ENCODE measurements at regions of chr6 and their contacts with region 1.

Region 1: DNA sequence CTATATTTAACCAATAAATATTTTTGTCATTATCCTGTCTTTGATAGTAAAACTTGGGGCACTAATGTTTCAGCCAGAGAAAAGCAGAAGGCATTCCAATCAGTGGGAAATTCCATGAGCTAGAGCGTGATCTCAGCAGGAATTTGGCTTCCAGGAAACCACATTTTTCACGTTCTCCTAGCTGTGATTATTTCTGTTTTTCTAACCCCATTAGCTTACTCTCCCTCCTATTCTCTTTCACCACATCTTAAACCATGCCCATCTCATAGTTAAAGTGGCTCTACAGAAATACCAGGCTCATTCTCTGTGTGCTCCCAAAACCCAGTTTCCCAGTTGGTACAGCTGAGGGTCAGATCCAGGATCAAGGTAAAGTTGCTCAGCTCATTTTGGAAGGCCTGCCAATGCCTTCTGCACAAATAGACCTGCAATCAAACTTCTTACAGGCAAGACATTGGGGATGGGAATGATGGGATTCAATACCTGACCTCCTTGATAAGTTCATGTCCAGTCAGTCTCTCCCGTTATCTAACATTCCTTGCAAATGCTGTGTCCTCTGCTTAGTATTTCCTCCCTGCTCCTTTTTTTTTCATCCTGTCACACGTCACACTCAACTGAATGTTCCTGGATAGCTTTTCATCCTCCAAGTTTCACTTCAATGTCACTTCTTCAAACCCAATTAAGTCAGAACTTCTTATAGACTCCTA is 33.1 kb upstream of the TMEM30A start:
- DNase-seq: no peak
- H3K4me3 ChIP-seq: no peak overlapping the region
- H3K27ac ChIP-seq: no peak overlapping the region
- H3K4me1 ChIP-seq: no peaks in the 10 kb centered on the region
- H3K27me3 ChIP-seq: 0 out of 2 replicates have a peak, but pooled peaks cover 6% of the 10 kb centered on the region
- CTCF ChIP-seq: no peak

Region 2: GRCh38 chr6:74997646-74998045 is 320.0 kb before region 1 on chr6:
- CTCF ChIA-PET with region 1: no interaction called
- POLR2A ChIA-PET with region 1: no interaction called
- intact Hi-C with region 1: no loop called
- DNase-seq: no peak
- H3K4me3 ChIP-seq: no peak overlapping the region
- H3K27ac ChIP-seq: no peak overlapping the region
- H3K4me1 ChIP-seq: no peaks in the 10 kb centered on the region
- H3K27me3 ChIP-seq: no peaks in the 10 kb centered on the region
- CTCF ChIP-seq: no peak

Region 3: GRCh38 chr6:75381877-75382633 is 64.4 kb after region 1 on chr6:
- CTCF ChIA-PET with region 1: no interaction called
- POLR2A ChIA-PET with region 1: no interaction called
- intact Hi-C with region 1: no loop called
- DNase-seq: no peak
- H3K4me3 ChIP-seq: no peak overlapping the region
- H3K27ac ChIP-seq: no peak overlapping the region
- H3K4me1 ChIP-seq: no peaks in the 10 kb centered on the region
- H3K27me3 ChIP-seq: no peaks in the 10 kb centered on the region
- CTCF ChIP-seq: no peak

Region 4: DNA sequence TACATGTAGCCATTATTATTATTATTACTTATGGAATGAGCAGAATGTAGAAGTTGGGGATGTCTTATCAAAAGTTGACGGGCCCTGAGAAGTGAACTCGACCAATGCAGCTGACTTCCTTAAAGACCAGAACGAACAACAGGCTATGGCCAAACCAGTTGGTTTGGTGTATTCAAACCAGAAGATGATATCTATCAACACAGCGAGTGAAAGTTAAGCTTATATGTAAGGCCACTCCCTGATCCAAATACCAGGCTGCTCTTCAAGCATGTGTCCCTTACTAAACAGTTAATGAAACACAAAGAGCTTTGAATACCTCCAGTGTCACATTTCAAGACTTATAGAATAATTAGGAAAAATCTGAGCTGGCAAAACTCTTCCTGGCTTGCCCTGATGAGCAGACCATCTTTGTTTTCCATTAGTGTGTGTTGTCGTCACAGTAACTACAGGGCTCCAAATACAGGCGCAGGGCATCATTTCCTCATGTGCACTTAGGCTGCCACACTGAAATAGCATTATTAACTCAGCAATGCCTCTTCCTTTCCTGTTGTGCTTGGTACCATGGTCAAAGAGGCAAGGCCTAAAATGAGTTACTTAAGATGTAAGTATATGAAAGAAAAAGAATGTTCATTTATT is 169.3 kb after region 1 on chr6:
- CTCF ChIA-PET with region 1: no interaction called
- POLR2A ChIA-PET with region 1: interaction called, 13 read pairs
- intact Hi-C with region 1: no loop called
- DNase-seq: peak; percentile 25 to 36
- H3K4me3 ChIP-seq: no peak overlapping the region
- H3K27ac ChIP-seq: no peak overlapping the region
- H3K4me1 ChIP-seq: no peaks in the 10 kb centered on the region
- H3K27me3 ChIP-seq: no peaks in the 10 kb centered on the region
- CTCF ChIP-seq: no peak

Measured in PC-9 (cell line).